A673 (cell line): ENCODE measurements at regions of chr10 and their contacts with region 1.

Region 1: GRCh38 chr10:28241741-28242399 is 61.0 kb downstream of the MPP7 start:
- DNase-seq: peak; percentile 66
- H3K4me3 ChIP-seq: no peak overlapping the region
- H3K27ac ChIP-seq: no peak overlapping the region
- H3K4me1 ChIP-seq: no peaks in the 10 kb centered on the region
- H3K27me3 ChIP-seq: peaks cover 6% of the 10 kb centered on the region
- CTCF ChIP-seq: peak; percentile 90

Region 2: DNA sequence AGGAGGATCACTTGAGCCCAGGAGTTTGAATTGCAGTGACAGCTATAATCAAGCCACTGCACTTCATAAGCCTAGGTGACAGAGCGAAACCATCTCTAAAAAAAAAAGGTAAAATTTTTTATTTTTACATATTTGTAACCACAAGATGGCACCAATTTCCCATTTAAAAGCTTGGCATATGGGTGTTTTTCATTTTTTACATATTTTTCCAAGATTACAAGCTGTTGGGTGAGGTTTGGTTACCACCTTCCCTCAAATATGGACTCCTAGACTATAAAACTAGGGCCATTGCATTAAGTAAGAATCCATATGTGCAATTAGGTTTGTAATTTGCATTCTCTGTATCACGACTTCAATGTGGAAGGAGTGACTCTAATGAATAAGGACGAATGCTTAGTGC is 872.0 kb before region 1 on chr10:
- CTCF ChIA-PET with region 1: interaction called, 3 read pairs
- POLR2A ChIA-PET with region 1: no interaction called
- intact Hi-C with region 1: loop called (anchors 5 kb)
- DNase-seq: peak; percentile 12
- H3K4me3 ChIP-seq: no peak overlapping the region
- H3K27ac ChIP-seq: no peak overlapping the region
- H3K4me1 ChIP-seq: no peaks in the 10 kb centered on the region
- H3K27me3 ChIP-seq: no peaks in the 10 kb centered on the region
- CTCF ChIP-seq: peak; percentile 49; the same call in 1 of the 2 replicates

Region 3: GRCh38 chr10:27446091-27446918 is 795.6 kb before region 1 on chr10:
- CTCF ChIA-PET with region 1: interaction called, 3 read pairs
- POLR2A ChIA-PET with region 1: no interaction called
- intact Hi-C with region 1: loop called (anchors 5 kb)
- DNase-seq: peak; percentile 65
- H3K4me3 ChIP-seq: no peak overlapping the region
- H3K27ac ChIP-seq: no peak overlapping the region
- H3K4me1 ChIP-seq: no peaks in the 10 kb centered on the region
- H3K27me3 ChIP-seq: no peaks in the 10 kb centered on the region
- CTCF ChIP-seq: peak; percentile 63

Region 4: DNA sequence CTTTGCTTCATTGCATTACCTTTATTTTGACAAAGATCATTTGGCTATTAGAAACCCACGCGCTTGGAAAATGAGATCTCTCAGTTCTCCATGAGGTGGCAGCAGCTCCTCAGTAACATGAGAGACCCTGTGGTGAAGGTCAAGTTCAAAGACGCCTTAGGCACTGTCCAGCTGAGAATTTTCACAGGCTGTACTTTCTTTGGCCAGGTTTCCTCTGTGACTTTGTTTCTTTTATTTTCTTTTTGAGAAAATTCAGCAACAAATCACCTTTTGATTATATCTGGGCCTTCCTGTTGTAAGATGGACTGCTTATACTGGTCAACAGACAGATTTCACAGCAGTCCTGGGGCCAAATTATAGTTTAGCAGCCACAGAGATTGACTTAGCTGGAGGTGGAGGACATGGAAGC is 683.3 kb before region 1 on chr10:
- CTCF ChIA-PET with region 1: interaction called, 8 read pairs
- POLR2A ChIA-PET with region 1: no interaction called
- intact Hi-C with region 1: loop called (anchors 5 kb)
- DNase-seq: peak; percentile 39
- H3K4me3 ChIP-seq: no peak overlapping the region
- H3K27ac ChIP-seq: no peak overlapping the region
- H3K4me1 ChIP-seq: no peaks in the 10 kb centered on the region
- H3K27me3 ChIP-seq: no peaks in the 10 kb centered on the region
- CTCF ChIP-seq: peak; percentile 79

Region 5: GRCh38 chr10:28997739-28998138 is 755.9 kb after region 1 on chr10:
- CTCF ChIA-PET with region 1: no interaction called
- POLR2A ChIA-PET with region 1: no interaction called
- intact Hi-C with region 1: no loop called
- DNase-seq: no peak
- H3K4me3 ChIP-seq: no peak overlapping the region
- H3K27ac ChIP-seq: no peak overlapping the region
- H3K4me1 ChIP-seq: no peaks in the 10 kb centered on the region
- H3K27me3 ChIP-seq: no peaks in the 10 kb centered on the region
- CTCF ChIP-seq: no peak